Ovary (tissue), 10 donors: ENCODE measurements at regions of chr15 and their contacts with region 1.

Region 1: GRCh38 chr15:41180206-41180789 is 50.3 kb downstream of the EXD1 start:
- DNase-seq: no peak
- H3K4me3 ChIP-seq: no peak overlapping the region
- H3K27ac ChIP-seq: no peak overlapping the region
- H3K4me1 ChIP-seq: no peaks in the 10 kb centered on the region
- H3K27me3 ChIP-seq: no peaks in the 10 kb centered on the region
- CTCF ChIP-seq: no peak
- EP300 ChIP-seq: no peak
- POLR2A ChIP-seq: no peak

Region 2: DNA sequence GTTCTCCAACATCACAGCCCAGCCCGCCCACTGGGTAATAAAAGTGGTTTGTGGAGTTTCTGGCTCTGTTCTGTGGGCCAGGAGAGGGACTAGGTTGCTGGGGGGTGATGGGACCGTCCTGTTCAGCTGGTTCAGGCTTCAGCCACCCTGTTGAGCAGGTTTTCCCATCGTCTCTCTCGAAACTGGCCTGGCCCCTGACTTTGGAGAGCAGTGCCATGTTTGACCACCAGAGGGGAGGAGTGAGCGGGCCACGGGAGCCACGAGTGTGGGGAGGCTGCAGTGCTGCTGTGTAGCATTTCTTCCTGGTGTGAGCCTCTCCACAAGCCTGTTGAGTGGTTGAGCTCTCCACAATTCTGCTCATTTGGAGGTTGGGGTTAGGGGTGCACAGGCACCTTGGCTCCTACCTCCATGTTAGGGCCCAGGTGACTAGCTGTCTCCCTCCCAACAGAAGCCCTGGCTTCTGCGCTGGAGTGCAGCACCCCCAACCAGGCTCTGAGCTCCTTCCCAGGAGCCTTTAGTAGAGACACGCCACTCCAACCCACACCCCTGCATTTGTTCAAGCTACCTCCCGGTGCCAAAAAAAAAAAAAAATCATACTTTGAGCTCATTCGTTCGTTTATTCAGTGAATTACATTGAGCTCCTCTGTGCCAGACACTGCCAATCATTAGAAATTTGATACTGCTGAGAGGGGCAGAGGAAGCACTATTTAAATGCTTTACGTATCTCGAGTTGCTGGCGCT is 322.5 kb before region 1 on chr15:
- intact Hi-C with region 1: loop called in 2 of 4 experiments (anchors 5 to 10 kb)
- DNase-seq: peak; percentile 46 to 79 (median 66)
- H3K4me3 ChIP-seq: no peak overlapping the region
- H3K27ac ChIP-seq: no peak overlapping the region
- H3K4me1 ChIP-seq: no peaks in the 10 kb centered on the region
- H3K27me3 ChIP-seq: no peaks in the 10 kb centered on the region
- CTCF ChIP-seq: peak; percentile 78 to 82 (median 82)
- EP300 ChIP-seq: no peak
- POLR2A ChIP-seq: no peak

Region 3: GRCh38 chr15:41022487-41023090 is 157.7 kb before region 1 on chr15:
- intact Hi-C with region 1: loop called in 1 of 4 experiments (anchors 5 kb)
- DNase-seq: peak in 2 of 5 donors; percentile 34 to 36
- H3K4me3 ChIP-seq: no peak overlapping the region
- H3K27ac ChIP-seq: no peak overlapping the region
- H3K4me1 ChIP-seq: peaks cover 3% of the 10 kb centered on the region
- H3K27me3 ChIP-seq: no peaks in the 10 kb centered on the region
- CTCF ChIP-seq: peak; percentile 13 to 50 (median 40)
- EP300 ChIP-seq: no peak
- POLR2A ChIP-seq: no peak

Region 4: GRCh38 chr15:41161336-41161735 is 19.0 kb before region 1 on chr15:
- intact Hi-C with region 1: no loop called
- DNase-seq: no peak
- H3K4me3 ChIP-seq: no peak overlapping the region
- H3K27ac ChIP-seq: no peak overlapping the region
- H3K4me1 ChIP-seq: no peaks in the 10 kb centered on the region
- H3K27me3 ChIP-seq: no peaks in the 10 kb centered on the region
- CTCF ChIP-seq: no peak
- EP300 ChIP-seq: no peak
- POLR2A ChIP-seq: no peak

Region 5: GRCh38 chr15:41401904-41402267 is 221.6 kb after region 1 on chr15:
- intact Hi-C with region 1: no loop called
- DNase-seq: no peak
- H3K4me3 ChIP-seq: peak overlapping the region; percentile 94
- H3K27ac ChIP-seq: peak overlapping the region; percentile 60 to 68
- H3K4me1 ChIP-seq: peaks cover 5% of the 10 kb centered on the region
- H3K27me3 ChIP-seq: no peaks in the 10 kb centered on the region
- CTCF ChIP-seq: no peak
- EP300 ChIP-seq: no peak
- POLR2A ChIP-seq: no peak